ENCODE measurements at regions of chr3 and their contacts with region 1.

Region 1: GRCh38 chr3:122258757-122259371 is 66.2 kb upstream of the CSTA start:
- DNase-seq: peak; percentile 56
- ATAC-seq: peak; percentile 82
- H3K4me3 ChIP-seq: no peak overlapping the region
- H3K27ac ChIP-seq: no peak overlapping the region
- H3K4me1 ChIP-seq: no peaks in the 10 kb centered on the region; the same call in 1 of the 2 replicates
- H3K27me3 ChIP-seq: peaks cover 15% of the 10 kb centered on the region
- CTCF ChIP-seq: peak; percentile 73
- POLR2A ChIP-seq: no peak
- RAD21 ChIP-seq: peak; percentile 80

Region 2: GRCh38 chr3:121749276-121750086 is 509.4 kb before region 1 on chr3 and contains the start of gene GOLGB1:
- CTCF ChIA-PET with region 1: no interaction called
- POLR2A ChIA-PET with region 1: no interaction called
- dilution Hi-C with region 1: no loop called
- in situ Hi-C with region 1: no loop called
- intact Hi-C with region 1: loop called (anchors 5 kb)
- DNase-seq: peak; percentile 100
- ATAC-seq: peak; percentile 93
- H3K4me3 ChIP-seq: peak within 1 kb of the TSS; percentile 72
- H3K27ac ChIP-seq: peak within 1 kb of the TSS; percentile 74
- H3K4me1 ChIP-seq: no peaks in the 10 kb centered on the region
- H3K27me3 ChIP-seq: no peaks in the 10 kb centered on the region
- CTCF ChIP-seq: 0 out of 2 replicates have a peak, but pooled peaks have one; percentile 1
- POLR2A ChIP-seq: peak; percentile 99
- RAD21 ChIP-seq: no peak
- total RNA-seq, gene GOLGB1: 30.3 and 56.1 TPM in 2 replicates

Region 3: GRCh38 chr3:121834696-121835464 is 424.0 kb before region 1 on chr3 and contains the starts of genes EAF2 and IQCB1:
- CTCF ChIA-PET with region 1: no interaction called
- POLR2A ChIA-PET with region 1: no interaction called
- dilution Hi-C with region 1: no loop called
- in situ Hi-C with region 1: no loop called
- intact Hi-C with region 1: loop called (anchors 10 kb)
- DNase-seq: peak; percentile 94
- ATAC-seq: peak; percentile 100
- H3K4me3 ChIP-seq: peak within 1 kb of the TSS; percentile 73
- H3K27ac ChIP-seq: peak within 1 kb of the TSS; percentile 53
- H3K4me1 ChIP-seq: peaks cover 2% of the 10 kb centered on the region; the same call in 1 of the 2 replicates
- H3K27me3 ChIP-seq: no peaks in the 10 kb centered on the region
- CTCF ChIP-seq: 0 out of 2 replicates have a peak, but pooled peaks have one; percentile 6
- POLR2A ChIP-seq: peak; percentile 56; the same call in 1 of the 2 replicates
- RAD21 ChIP-seq: no peak
- total RNA-seq, gene EAF2: 2.2 and 2.3 TPM in 2 replicates
- total RNA-seq, gene IQCB1: 18.3 and 26.4 TPM in 2 replicates

Region 4: GRCh38 chr3:122101646-122102045 is 157.2 kb before region 1 on chr3:
- CTCF ChIA-PET with region 1: interaction called, 18 read pairs
- POLR2A ChIA-PET with region 1: interaction called, 7 read pairs
- dilution Hi-C with region 1: no loop called
- in situ Hi-C with region 1: loop called (anchors 10 kb)
- intact Hi-C with region 1: loop called (anchors 1 kb)
- DNase-seq: peak; percentile 66
- ATAC-seq: peak; percentile 72
- H3K4me3 ChIP-seq: no peak overlapping the region
- H3K27ac ChIP-seq: no peak overlapping the region
- H3K4me1 ChIP-seq: no peaks in the 10 kb centered on the region
- H3K27me3 ChIP-seq: peaks cover 13% of the 10 kb centered on the region
- CTCF ChIP-seq: peak; percentile 74
- POLR2A ChIP-seq: no peak
- RAD21 ChIP-seq: peak; percentile 82

Region 5: DNA sequence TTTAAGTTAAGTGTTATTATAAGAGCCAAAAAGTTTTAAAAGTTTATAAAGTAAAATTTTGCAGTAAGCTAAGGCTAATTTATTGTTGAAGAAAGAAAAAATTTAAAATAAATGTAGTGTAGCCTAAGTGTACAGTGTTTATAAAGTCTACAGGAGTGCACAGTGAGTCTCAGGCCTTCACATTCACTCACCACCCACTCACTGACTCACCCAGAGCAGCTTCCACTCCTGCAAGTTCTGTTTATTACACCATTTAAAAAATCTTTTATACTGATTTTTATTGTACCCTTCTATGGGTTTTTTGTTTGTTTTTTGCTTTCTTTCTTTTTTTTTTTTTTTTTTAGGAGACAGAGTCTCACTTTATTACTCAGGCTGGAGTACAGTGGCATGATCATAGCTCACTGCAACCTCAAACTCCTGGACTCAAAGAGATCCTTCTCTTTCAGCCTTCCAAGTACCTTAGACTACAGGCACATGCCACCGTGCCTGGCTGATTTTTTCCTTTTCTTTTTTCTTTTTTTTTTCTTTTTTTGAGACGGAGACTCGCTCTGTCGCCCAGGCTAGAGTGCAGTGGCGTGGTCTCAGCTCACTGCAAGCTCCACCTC is 92.1 kb after region 1 on chr3:
- CTCF ChIA-PET with region 1: no interaction called
- POLR2A ChIA-PET with region 1: no interaction called
- dilution Hi-C with region 1: no loop called
- in situ Hi-C with region 1: no loop called
- intact Hi-C with region 1: loop called (anchors 2 kb)
- DNase-seq: peak; percentile 87
- ATAC-seq: peak; percentile 98
- H3K4me3 ChIP-seq: no peak overlapping the region
- H3K27ac ChIP-seq: no peak overlapping the region
- H3K4me1 ChIP-seq: peaks cover 3% of the 10 kb centered on the region
- H3K27me3 ChIP-seq: no peaks in the 10 kb centered on the region
- CTCF ChIP-seq: no peak
- POLR2A ChIP-seq: no peak
- RAD21 ChIP-seq: no peak

Region 6: GRCh38 chr3:122514123-122515019 is 255.5 kb after region 1 on chr3 and contains the start of gene KPNA1:
- CTCF ChIA-PET with region 1: no interaction called
- POLR2A ChIA-PET with region 1: no interaction called
- dilution Hi-C with region 1: no loop called
- in situ Hi-C with region 1: no loop called
- intact Hi-C with region 1: no loop called
- DNase-seq: peak; percentile 83
- ATAC-seq: peak; percentile 93
- H3K4me3 ChIP-seq: peak within 1 kb of the TSS; percentile 88
- H3K27ac ChIP-seq: peak within 1 kb of the TSS; percentile 91
- H3K4me1 ChIP-seq: 0 out of 2 replicates have a peak, but pooled peaks cover 3% of the 10 kb centered on the region
- H3K27me3 ChIP-seq: no peaks in the 10 kb centered on the region
- CTCF ChIP-seq: no peak
- POLR2A ChIP-seq: peak; percentile 92
- RAD21 ChIP-seq: no peak
- total RNA-seq, gene KPNA1: 53.3 and 112 TPM in 2 replicates